ENCODE measurements at regions of chr5 and their contacts with region 1.

Region 1: GRCh38 chr5:79754865-79755555 is 65.4 kb downstream of the CMYA5 start:
- DNase-seq: no peak
- H3K4me3 Mint-ChIP-seq: no peak overlapping the region
- H3K27ac Mint-ChIP-seq: no peak overlapping the region
- H3K4me1 Mint-ChIP-seq: no peaks in the 10 kb centered on the region
- H3K27me3 Mint-ChIP-seq: peaks cover 5% of the 10 kb centered on the region

Region 2: DNA sequence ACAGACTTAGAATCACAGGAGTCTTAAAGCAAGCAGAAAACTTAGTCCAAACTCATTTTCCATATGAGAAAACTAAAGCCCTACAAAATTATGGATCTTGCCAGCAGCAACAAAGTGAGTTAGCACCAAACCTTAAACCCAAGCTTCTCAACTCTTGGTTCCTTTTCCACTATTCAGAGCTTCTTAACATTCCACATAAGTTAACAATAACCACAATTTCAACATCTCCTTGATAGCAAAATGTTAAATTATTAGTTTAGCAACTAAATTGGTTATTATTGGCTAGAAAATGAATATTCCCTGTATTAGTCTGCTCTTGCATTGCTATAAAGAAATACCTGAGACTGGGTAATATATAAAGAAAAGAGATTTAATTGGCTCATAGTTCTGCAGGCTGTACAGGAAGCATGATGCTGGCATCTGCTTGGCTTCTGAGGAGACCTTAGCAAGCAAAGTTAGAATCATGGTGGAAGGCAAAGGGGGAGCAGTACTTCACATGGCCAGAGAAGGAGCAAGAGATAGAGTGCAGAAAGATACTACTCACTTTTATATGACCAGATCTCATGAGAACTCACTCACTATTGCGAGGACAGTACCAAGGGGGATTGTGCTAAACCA is 743.7 kb before region 1 on chr5:
- intact Hi-C with region 1: no loop called
- DNase-seq: no peak
- H3K4me3 Mint-ChIP-seq: no peak overlapping the region
- H3K27ac Mint-ChIP-seq: no peak overlapping the region
- H3K4me1 Mint-ChIP-seq: no peaks in the 10 kb centered on the region
- H3K27me3 Mint-ChIP-seq: peaks cover 22% of the 10 kb centered on the region

Region 3: DNA sequence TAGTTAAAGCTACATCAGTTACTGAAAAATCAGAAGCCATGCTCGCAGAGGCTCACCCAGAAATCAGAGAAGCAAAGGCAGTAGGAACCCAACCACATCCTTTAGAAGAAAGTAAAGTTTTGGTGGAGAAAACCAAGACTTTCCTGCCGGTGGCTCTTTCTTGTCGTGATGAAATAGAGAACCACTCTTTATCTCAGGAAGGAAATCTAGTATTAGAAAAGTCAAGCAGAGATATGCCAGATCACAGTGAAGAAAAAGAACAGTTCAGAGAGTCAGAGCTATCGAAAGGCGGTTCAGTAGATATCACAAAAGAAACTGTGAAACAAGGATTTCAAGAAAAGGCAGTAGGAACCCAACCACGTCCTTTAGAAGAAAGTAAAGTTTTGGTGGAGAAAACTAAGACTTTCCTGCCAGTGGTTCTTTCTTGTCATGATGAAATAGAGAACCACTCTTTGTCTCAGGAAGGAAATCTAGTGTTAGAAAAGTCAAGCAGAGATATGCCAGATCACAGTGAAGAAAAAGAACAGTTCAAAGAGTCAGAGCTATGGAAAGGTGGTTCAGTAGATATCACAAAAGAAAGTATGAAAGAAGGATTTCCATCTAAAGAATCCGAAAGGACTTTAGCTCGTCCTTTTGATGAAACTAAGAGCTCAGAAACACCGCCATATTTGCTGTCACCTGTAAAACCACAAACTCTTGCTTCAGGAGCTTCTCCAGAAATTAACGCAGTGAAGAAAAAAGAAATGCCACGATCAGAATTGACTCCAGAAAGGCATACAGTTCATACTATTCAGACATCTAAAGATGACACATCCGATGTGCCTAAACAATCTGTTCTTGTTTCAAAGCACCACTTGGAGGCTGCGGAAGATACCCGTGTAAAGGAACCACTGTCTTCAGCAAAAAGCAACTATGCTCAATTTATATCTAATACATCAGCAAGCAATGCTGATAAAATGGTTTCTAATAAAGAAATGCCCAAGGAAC is 18.2 kb before region 1 on chr5:
- intact Hi-C with region 1: loop called (anchors 2 kb)
- DNase-seq: peak; percentile 2
- H3K4me3 Mint-ChIP-seq: peak overlapping the region; percentile 53
- H3K27ac Mint-ChIP-seq: peak overlapping the region; percentile 46
- H3K4me1 Mint-ChIP-seq: peaks cover 43% of the 10 kb centered on the region
- H3K27me3 Mint-ChIP-seq: peaks cover 50% of the 10 kb centered on the region

Region 4: GRCh38 chr5:79886925-79887655 is 132.1 kb after region 1 on chr5:
- intact Hi-C with region 1: no loop called
- DNase-seq: no peak
- H3K4me3 Mint-ChIP-seq: no peak overlapping the region
- H3K27ac Mint-ChIP-seq: no peak overlapping the region
- H3K4me1 Mint-ChIP-seq: no peaks in the 10 kb centered on the region
- H3K27me3 Mint-ChIP-seq: peaks cover 4% of the 10 kb centered on the region

Measured in activated T-helper 1 cell treated with anti-CD3 and anti-CD28 coated beads, Interleukin-12 subunit alpha, Interleukin-12 subunit beta, Interleukin-2, Interleukin-4 antibody, amounts not matched to agents 30 ng/mL and 10 ng/mL and 1 ng/mL, durations not matched to agents 14 hours and 24 hours and 36 hours (primary cell).